Activated CD4-positive, alpha-beta T cell treated with anti-CD3 and anti-CD28 coated beads for 36 hours (primary cell): ENCODE measurements at regions of chr2 and their contacts with region 1.

Region 1: DNA sequence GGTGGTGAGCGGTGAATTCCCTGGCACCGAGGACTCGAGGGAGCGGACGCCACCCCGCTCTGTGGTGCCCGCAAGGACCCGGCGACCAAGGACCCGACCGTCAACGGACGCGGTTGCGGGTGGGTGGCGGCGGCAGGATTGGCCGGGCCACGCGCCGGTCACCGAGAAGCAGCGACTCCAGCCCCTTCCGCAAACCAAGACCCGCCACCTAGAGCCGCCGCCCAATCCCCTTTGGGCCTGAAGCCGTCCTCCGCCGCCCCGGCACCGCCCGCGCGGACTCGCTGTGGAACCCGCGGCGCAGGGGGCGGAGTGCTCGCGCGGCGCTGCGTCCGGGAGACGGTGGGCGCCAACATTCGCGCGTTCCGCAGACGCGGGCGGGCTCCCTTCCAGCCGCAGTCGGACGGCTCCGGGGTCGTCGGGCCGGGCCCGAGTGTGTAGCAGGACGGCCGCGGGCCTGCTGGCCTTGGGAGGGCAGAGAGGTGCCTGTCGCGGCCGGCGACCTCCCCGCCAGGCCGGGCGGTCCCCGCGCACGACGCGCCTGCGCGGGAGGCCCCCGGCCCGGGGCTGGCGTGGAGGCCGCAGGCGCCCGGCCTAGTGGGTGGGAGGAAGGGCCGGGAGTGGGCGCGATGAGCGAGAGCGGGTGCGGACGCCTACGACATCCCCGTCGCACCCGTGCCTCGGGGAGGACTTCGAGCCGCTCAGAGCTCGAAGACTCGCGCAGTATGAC is at the starts of genes FAM228B and PFN4:
- DNase-seq: peak; percentile 79
- ATAC-seq: peak; percentile 89
- H3K4me3 Mint-ChIP-seq: peak within 1 kb of the TSS; percentile 75
- H3K27ac Mint-ChIP-seq: peak within 1 kb of the TSS; percentile 78
- H3K4me1 Mint-ChIP-seq: peaks cover 9% of the 10 kb centered on the region
- H3K27me3 Mint-ChIP-seq: no peaks in the 10 kb centered on the region
- total RNA-seq, gene FAM228B: 5.2 to 10.5 TPM
- total RNA-seq, gene PFN4: 0.30 TPM in 1 of 2 experiments, not detected in the other

Region 2: GRCh38 chr2:23124214-23124750 is 999.1 kb before region 1 on chr2:
- CTCF ChIA-PET with region 1: no interaction called
- POLR2A ChIA-PET with region 1: interaction called, 11 read pairs
- intact Hi-C with region 1: no loop called
- DNase-seq: no peak
- ATAC-seq: no peak
- H3K4me3 Mint-ChIP-seq: no peak overlapping the region
- H3K27ac Mint-ChIP-seq: no peak overlapping the region
- H3K4me1 Mint-ChIP-seq: no peaks in the 10 kb centered on the region
- H3K27me3 Mint-ChIP-seq: peaks cover 4% of the 10 kb centered on the region

Region 3: DNA sequence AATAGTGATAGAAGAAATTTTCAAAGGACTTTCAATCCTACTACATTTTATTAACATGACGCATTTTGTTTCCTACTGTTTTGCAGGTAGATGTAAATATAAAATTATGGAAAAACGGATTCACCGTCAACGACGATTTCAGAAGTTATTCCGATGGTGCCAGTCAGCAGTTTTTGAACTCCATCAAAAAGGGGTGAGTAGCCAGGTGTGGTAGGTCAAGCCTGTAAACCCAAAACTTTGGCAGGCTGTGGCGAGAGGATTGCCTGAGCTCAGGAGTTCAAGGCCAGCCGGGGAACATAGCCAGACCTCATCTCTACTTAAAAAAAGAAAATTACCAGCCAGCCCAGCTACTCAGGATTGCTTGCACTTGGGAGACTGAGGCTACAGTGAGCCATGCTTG is 146.5 kb before region 1 on chr2:
- CTCF ChIA-PET with region 1: no interaction called
- POLR2A ChIA-PET with region 1: no interaction called
- intact Hi-C with region 1: no loop called
- DNase-seq: no peak
- ATAC-seq: no peak
- H3K4me3 Mint-ChIP-seq: no peak overlapping the region
- H3K27ac Mint-ChIP-seq: no peak overlapping the region
- H3K4me1 Mint-ChIP-seq: no peaks in the 10 kb centered on the region
- H3K27me3 Mint-ChIP-seq: no peaks in the 10 kb centered on the region

Region 4: GRCh38 chr2:23988371-23988770 is 135.0 kb before region 1 on chr2:
- CTCF ChIA-PET with region 1: no interaction called
- POLR2A ChIA-PET with region 1: no interaction called
- intact Hi-C with region 1: no loop called
- DNase-seq: no peak
- ATAC-seq: no peak
- H3K4me3 Mint-ChIP-seq: no peak overlapping the region
- H3K27ac Mint-ChIP-seq: no peak overlapping the region
- H3K4me1 Mint-ChIP-seq: no peaks in the 10 kb centered on the region
- H3K27me3 Mint-ChIP-seq: no peaks in the 10 kb centered on the region

Region 5: GRCh38 chr2:24054366-24055010 is 68.9 kb before region 1 on chr2:
- CTCF ChIA-PET with region 1: no interaction called
- POLR2A ChIA-PET with region 1: no interaction called
- intact Hi-C with region 1: no loop called
- DNase-seq: no peak
- ATAC-seq: no peak
- H3K4me3 Mint-ChIP-seq: no peak overlapping the region
- H3K27ac Mint-ChIP-seq: no peak overlapping the region
- H3K4me1 Mint-ChIP-seq: no peaks in the 10 kb centered on the region
- H3K27me3 Mint-ChIP-seq: peaks cover 2% of the 10 kb centered on the region